CD4-positive, alpha-beta memory T cell (primary cell): ENCODE measurements at regions of chr17 and their contacts with region 1.

Region 1: GRCh38 chr17:75289115-75289831 is at the start of gene SLC25A19:
- DNase-seq: peak; percentile 95 to 99 (median 97)
- H3K4me3 ChIP-seq: peak within 1 kb of the TSS; percentile 93 to 96
- H3K4me3 Mint-ChIP-seq: peak within 1 kb of the TSS; percentile 98 to 100 (median 100)
- H3K27ac ChIP-seq: peak within 1 kb of the TSS; percentile 79
- H3K27ac Mint-ChIP-seq: peak within 1 kb of the TSS; percentile 98 to 100 (median 100)
- H3K4me1 ChIP-seq: peaks cover 12% of the 10 kb centered on the region
- H3K4me1 Mint-ChIP-seq: peaks cover 4 to 31% (median 14%) of the 10 kb centered on the region in 4 donors
- H3K27me3 ChIP-seq: no peaks in the 10 kb centered on the region
- H3K27me3 Mint-ChIP-seq: no peaks in the 10 kb centered on the region
- total RNA-seq, gene SLC25A19: 19.8 to 21.8 TPM

Region 2: GRCh38 chr17:75182569-75183450 is 106.5 kb before region 1 on chr17 and contains the start of gene SUMO2:
- CTCF ChIA-PET with region 1: no interaction called
- POLR2A ChIA-PET with region 1: interaction called, 9 read pairs
- intact Hi-C with region 1: loop called (anchors 1 kb)
- DNase-seq: peak; percentile 92 to 95 (median 94)
- H3K4me3 ChIP-seq: peak within 1 kb of the TSS; percentile 52 to 93
- H3K4me3 Mint-ChIP-seq: peak within 1 kb of the TSS; percentile 89 to 97 (median 92)
- H3K27ac ChIP-seq: peak within 1 kb of the TSS; percentile 94
- H3K27ac Mint-ChIP-seq: peak within 1 kb of the TSS; percentile 87 to 98 (median 97)
- H3K4me1 ChIP-seq: peaks cover 44% of the 10 kb centered on the region
- H3K4me1 Mint-ChIP-seq: peaks cover 20 to 47% (median 35%) of the 10 kb centered on the region in 4 donors
- H3K27me3 ChIP-seq: no peaks in the 10 kb centered on the region
- H3K27me3 Mint-ChIP-seq: no peaks in the 10 kb centered on the region
- total RNA-seq, gene SUMO2: 255 to 264 TPM

Region 3: DNA sequence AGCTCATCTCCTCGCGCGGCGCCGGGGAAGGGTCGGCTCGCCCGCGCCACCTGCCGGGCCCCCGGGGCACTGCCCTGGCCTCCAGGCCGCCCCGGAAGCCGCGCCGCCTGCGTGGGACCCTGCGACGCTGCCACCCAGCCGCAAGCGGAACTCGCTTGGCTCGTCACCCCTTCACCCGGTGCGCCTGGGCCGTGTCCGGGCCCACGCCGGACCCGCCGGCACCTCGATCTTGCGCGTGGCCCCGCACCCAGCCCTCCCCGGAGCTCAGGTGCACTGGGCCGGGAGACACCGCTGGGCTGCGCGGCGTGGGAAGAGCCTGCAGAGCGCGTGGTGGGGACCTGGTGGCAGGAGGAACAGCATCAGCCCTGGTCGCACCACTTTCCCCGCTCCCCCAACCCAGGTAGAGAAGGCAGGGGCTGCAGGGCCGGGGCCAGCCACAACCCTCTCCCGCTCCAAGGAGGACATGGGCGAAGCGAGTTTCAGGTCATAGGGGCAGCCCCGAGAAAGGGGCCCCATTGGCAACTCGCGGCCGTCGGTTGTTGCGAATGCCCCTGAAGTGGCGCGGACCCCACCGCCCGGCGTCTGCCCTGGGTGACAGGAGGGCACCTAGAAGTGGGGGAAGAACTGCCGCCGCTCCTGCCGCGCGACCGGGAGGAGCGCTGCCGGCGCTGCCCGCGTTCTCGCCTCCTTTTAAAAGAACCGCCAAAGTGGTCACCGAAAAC is 17.9 kb before region 1 on chr17:
- CTCF ChIA-PET with region 1: interaction called, 59 read pairs
- POLR2A ChIA-PET with region 1: interaction called, 148 read pairs
- intact Hi-C with region 1: loop called (anchors 1 kb)
- DNase-seq: peak; percentile 86 to 94 (median 88)
- H3K4me3 ChIP-seq: peak overlapping the region; percentile 42 to 82
- H3K4me3 Mint-ChIP-seq: peak overlapping the region; percentile 80 to 91 (median 84)
- H3K27ac ChIP-seq: peak overlapping the region; percentile 89
- H3K27ac Mint-ChIP-seq: peak overlapping the region; percentile 25 to 94 (median 88)
- H3K4me1 ChIP-seq: peaks cover 27% of the 10 kb centered on the region
- H3K4me1 Mint-ChIP-seq: peaks cover 10 to 35% (median 22%) of the 10 kb centered on the region in 4 donors
- H3K27me3 ChIP-seq: no peaks in the 10 kb centered on the region
- H3K27me3 Mint-ChIP-seq: no peaks in the 10 kb centered on the region

Region 4: DNA sequence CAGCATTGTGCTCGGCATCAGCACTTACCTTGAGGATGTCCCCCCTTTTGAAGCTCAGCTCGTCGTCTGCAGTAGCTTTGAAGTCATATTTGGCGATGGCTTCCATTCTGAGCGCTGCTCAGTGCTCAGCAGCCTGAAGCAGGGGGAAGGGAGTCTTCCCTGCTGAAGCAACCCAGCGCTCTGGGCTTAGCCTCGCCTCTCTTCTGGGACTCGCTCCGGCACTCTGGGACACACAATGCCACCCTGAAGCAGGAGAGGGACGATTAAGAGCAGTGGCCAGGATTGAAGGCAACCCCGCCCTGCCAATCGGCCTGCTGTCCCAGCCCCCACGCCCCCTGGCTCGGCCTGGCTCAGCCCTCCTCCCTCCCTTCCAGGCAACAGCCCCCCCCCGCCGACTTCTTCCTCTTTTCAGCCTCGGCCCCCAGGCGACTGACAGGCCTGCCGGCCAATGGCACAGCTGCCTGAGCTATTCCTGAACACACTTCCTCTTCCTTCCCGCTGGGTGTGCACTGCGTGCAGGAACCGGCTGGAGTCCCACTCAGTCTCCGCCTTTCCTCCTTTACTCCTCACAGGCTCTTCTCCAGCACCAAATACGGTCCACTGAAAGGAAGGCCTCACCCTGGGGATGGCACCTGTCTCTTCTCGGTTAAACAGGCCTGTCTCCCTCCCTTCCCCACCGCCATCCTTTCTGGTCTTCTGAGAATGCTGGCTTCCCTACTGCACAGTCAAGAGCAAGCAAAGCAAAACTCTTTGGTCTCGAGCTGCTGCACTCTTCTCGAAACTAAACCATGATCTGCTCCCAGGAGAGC is 104.5 kb after region 1 on chr17:
- CTCF ChIA-PET with region 1: interaction called, 7 read pairs
- POLR2A ChIA-PET with region 1: interaction called, 13 read pairs
- intact Hi-C with region 1: no loop called
- DNase-seq: peak; percentile 66 to 86 (median 75)
- H3K4me3 ChIP-seq: peak overlapping the region; percentile 30 to 60
- H3K4me3 Mint-ChIP-seq: peak overlapping the region; percentile 90 to 97 (median 95)
- H3K27ac ChIP-seq: peak overlapping the region; percentile 66
- H3K27ac Mint-ChIP-seq: peak overlapping the region; percentile 71 to 96 (median 89)
- H3K4me1 ChIP-seq: peaks cover 78% of the 10 kb centered on the region
- H3K4me1 Mint-ChIP-seq: peaks cover 63 to 88% (median 72%) of the 10 kb centered on the region in 4 donors
- H3K27me3 ChIP-seq: no peaks in the 10 kb centered on the region
- H3K27me3 Mint-ChIP-seq: no peaks in the 10 kb centered on the region

Region 5: DNA sequence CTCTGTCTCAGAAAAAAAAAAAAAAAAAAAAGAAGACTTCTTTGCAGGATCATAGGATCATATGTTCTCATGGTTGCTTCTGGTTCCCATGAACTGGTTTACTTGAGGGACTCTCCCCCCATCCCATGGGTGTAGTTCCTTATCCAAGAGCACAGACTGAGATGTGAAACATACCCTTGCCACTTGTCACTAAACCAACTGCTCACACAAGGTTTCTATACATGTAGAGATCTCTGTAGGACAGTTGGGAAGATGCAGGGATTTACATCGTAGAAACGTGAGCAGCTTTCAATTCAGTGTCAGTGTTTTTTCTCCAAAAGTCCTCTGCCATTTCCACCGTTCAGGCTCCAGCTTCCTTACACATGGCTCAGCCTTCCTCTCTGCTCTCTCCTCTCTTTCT is 156.0 kb after region 1 on chr17:
- CTCF ChIA-PET with region 1: no interaction called
- POLR2A ChIA-PET with region 1: no interaction called
- intact Hi-C with region 1: no loop called
- DNase-seq: no peak
- H3K4me3 ChIP-seq: no peak overlapping the region
- H3K4me3 Mint-ChIP-seq: no peak overlapping the region
- H3K27ac ChIP-seq: no peak overlapping the region
- H3K27ac Mint-ChIP-seq: no peak overlapping the region
- H3K4me1 ChIP-seq: no peaks in the 10 kb centered on the region
- H3K4me1 Mint-ChIP-seq: peaks cover 0 to 3% (median 1%) of the 10 kb centered on the region in 4 donors
- H3K27me3 ChIP-seq: no peaks in the 10 kb centered on the region
- H3K27me3 Mint-ChIP-seq: no peaks in the 10 kb centered on the region

Region 6: GRCh38 chr17:75456417-75457046 is 167.3 kb after region 1 on chr17 and contains the start of gene TMEM94:
- CTCF ChIA-PET with region 1: no interaction called
- POLR2A ChIA-PET with region 1: interaction called, 12 read pairs
- intact Hi-C with region 1: no loop called
- DNase-seq: peak; percentile 90 to 94 (median 92)
- H3K4me3 ChIP-seq: peak within 1 kb of the TSS; percentile 94 to 95
- H3K4me3 Mint-ChIP-seq: peak within 1 kb of the TSS; percentile 93 to 99 (median 95)
- H3K27ac ChIP-seq: peak within 1 kb of the TSS; percentile 67
- H3K27ac Mint-ChIP-seq: peak within 1 kb of the TSS; percentile 90 to 98 (median 96)
- H3K4me1 ChIP-seq: peaks cover 18% of the 10 kb centered on the region
- H3K4me1 Mint-ChIP-seq: peaks cover 20 to 35% (median 30%) of the 10 kb centered on the region in 4 donors
- H3K27me3 ChIP-seq: no peaks in the 10 kb centered on the region
- H3K27me3 Mint-ChIP-seq: no peaks in the 10 kb centered on the region
- total RNA-seq, gene TMEM94: 109 TPM